Breast epithelium (tissue), 4 donors: ENCODE measurements at regions of chr3 and their contacts with region 1.

Region 1: DNA sequence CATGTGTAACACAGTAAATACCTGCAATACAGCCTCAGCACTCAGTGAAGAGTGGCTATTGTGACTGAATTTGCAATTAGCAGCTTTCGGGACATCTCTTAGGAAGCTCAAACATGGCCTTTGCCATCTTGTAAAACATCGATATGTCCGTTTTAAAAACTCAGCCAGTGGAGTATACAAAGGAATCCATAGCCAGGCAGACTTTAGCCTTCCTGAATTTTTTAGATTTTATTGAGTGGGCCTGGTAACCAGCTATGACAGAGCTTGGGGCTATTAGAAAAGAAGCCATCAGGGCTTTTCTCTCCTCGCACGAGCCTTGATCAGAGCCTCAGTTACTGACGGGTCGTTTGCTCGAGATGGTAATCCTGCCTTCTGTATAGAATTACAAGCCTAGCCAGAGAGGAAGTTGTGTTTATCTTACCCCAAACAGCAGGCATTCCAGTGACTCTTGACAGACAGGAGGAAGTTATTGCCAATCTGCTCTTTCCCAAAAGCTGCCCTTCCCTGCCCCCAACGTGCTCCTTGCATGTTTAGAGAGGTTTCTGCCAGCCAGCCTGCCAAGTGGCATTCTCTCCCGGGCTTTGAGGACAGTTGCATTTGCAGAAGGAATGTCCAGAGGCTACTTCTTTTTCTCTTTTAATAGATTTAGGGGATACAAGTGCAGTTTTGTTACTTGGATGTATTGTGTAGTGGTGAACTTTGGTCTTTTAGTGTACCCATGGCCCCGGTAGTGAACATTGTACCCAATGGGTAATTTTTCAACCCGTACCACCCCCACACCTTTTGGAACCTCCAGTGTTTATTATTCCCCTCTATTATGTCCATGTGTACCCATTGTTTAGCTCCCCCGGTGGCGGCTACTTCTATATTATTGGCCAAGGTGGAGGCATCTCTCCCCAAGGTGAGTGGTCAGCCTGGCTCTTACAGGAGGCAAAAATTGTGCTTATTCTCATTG is 40.6 kb downstream of the ITPR1 start:
- DNase-seq: peak; percentile 65 to 66
- H3K4me3 ChIP-seq: peak overlapping the region in 1 of 3 donors; percentile 30
- H3K27ac ChIP-seq: peak overlapping the region; percentile 56 to 75
- H3K4me1 ChIP-seq: peaks cover 5 to 9% of the 10 kb centered on the region in 2 donors
- H3K27me3 ChIP-seq: no peaks in the 10 kb centered on the region
- CTCF ChIP-seq: no peak
- POLR2A ChIP-seq: no peak

Region 2: DNA sequence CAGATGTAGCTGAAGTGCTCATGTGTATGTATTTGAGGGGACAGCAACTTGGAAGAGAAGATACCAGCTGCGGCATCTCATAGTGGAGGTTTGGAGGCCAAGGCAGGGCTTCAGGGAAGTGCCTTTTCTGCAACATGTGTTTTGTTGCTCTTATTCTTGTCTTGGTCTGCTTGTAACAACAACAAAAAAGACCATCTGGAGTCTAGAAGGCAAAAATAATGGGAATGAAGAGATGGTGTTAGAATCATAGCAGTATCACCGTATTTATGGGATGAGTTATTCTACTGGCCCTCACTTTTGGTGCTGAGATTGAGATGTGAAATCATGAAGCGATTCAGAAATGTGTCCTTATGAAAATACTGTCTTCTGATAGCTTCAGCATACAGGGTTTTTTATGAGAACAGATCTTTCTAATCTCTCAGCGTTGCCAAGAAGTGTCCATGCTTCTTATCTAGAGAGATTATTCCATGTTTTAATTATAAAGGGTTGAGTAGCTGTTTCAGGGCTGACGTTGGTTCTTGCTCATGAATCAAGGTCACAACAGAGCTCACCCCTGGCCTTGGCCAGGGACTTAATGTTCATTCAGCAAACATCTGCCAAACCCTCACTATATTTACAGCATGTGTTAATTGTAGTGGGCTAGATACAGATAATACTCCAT is 17.4 kb after region 1 on chr3:
- intact Hi-C with region 1: no loop called
- DNase-seq: no peak
- H3K4me3 ChIP-seq: no peak overlapping the region
- H3K27ac ChIP-seq: no peak overlapping the region
- H3K4me1 ChIP-seq: no peaks in the 10 kb centered on the region
- H3K27me3 ChIP-seq: no peaks in the 10 kb centered on the region
- CTCF ChIP-seq: no peak
- POLR2A ChIP-seq: no peak

Region 3: DNA sequence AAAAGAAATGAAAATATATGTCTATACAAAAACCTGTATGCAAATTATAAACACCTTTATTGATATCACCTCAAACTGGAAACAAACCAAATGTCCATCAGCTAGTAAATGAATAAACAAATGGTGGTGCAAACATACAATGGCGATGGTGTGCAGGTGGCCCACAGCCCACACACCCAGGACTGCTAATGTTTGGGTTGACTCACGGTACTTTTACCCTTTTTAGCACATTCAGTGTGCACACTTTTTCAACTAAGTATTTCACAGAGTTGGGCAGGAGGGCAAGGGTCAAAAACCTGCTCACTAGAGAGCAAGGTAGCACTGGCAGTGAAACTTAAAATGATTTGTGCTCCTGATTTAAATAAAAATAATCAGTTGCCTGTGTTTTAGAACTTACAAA is 322.4 kb after region 1 on chr3:
- intact Hi-C with region 1: loop called (anchors 5 kb)
- DNase-seq: no peak
- H3K4me3 ChIP-seq: no peak overlapping the region
- H3K27ac ChIP-seq: no peak overlapping the region
- H3K4me1 ChIP-seq: no peaks in the 10 kb centered on the region
- H3K27me3 ChIP-seq: no peaks in the 10 kb centered on the region
- CTCF ChIP-seq: no peak
- POLR2A ChIP-seq: no peak